ENCODE measurements at regions of chr4 and their contacts with region 1.

Region 1: DNA sequence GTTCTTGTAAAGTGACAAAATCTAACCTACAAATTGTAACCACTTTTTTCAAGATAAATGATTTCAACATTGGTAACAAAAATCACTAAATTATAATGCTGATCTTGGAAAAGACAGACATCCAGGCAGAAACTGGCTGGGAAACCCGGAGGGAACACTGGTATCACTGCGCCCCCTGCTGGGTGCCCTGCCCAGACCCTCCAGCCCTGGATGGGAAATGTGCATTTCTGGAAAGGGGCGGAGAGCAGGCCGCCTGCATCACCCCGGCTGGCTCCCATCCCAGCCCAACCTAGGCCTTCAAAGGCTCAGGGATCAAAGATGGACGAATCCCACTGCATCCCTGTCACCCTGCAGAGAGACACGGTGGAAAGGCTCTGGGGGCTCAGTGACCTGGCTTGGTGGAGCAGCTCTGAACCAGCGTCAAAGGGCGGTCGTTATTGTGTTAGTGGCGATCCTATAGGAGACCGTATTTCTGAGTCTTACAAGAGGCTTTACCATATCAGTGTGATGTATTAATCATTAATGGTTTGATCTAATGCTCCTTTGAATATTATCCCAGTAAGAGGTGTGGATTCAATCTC is 37.3 kb downstream of the ACOX3 start:
- DNase-seq: peak; percentile 40 to 67
- ATAC-seq: peak in 2 of 3 donors; percentile 54 to 62
- H3K4me3 ChIP-seq: no peak overlapping the region
- H3K4me3 Mint-ChIP-seq: no peak overlapping the region
- H3K27ac ChIP-seq: no peak overlapping the region
- H3K27ac Mint-ChIP-seq: no peak overlapping the region
- H3K4me1 ChIP-seq: no peaks in the 10 kb centered on the region
- H3K4me1 Mint-ChIP-seq: no peaks in the 10 kb centered on the region
- H3K27me3 ChIP-seq: no peaks in the 10 kb centered on the region
- H3K27me3 Mint-ChIP-seq: no peaks in the 10 kb centered on the region
- CTCF ChIP-seq: peak; percentile 83

Region 2: GRCh38 chr4:8241895-8242696 is 161.2 kb before region 1 on chr4:
- intact Hi-C with region 1: loop called (anchors 2 kb)
- DNase-seq: peak; percentile 78 to 81
- ATAC-seq: peak; percentile 73 to 93 (median 90)
- H3K4me3 ChIP-seq: no peak overlapping the region
- H3K4me3 Mint-ChIP-seq: no peak overlapping the region
- H3K27ac ChIP-seq: no peak overlapping the region
- H3K27ac Mint-ChIP-seq: no peak overlapping the region
- H3K4me1 ChIP-seq: peaks cover 10% of the 10 kb centered on the region
- H3K4me1 Mint-ChIP-seq: no peaks in the 10 kb centered on the region
- H3K27me3 ChIP-seq: no peaks in the 10 kb centered on the region
- H3K27me3 Mint-ChIP-seq: no peaks in the 10 kb centered on the region
- CTCF ChIP-seq: peak; percentile 86

Measured in natural killer cell (primary cell).